AG04449 (cell line): ENCODE measurements at regions of chr1 and their contacts with region 1.

Region 1: GRCh38 chr1:10430216-10431069 is at the start of gene CENPS:
- DNase-seq: no peak
- H3K4me3 ChIP-seq: peak within 1 kb of the TSS; percentile 90
- CTCF ChIP-seq: peak; percentile 91

Region 2: GRCh38 chr1:9874959-9875635 is 555.3 kb before region 1 on chr1:
- CTCF ChIA-PET with region 1: interaction called, 11 read pairs
- POLR2A ChIA-PET with region 1: no interaction called
- DNase-seq: no peak
- H3K4me3 ChIP-seq: no peak overlapping the region
- CTCF ChIP-seq: peak; percentile 80

Region 3: GRCh38 chr1:10387413-10388079 is 42.9 kb before region 1 on chr1:
- CTCF ChIA-PET with region 1: interaction called, 34 read pairs
- POLR2A ChIA-PET with region 1: no interaction called
- DNase-seq: peak; percentile 65
- H3K4me3 ChIP-seq: peak overlapping the region; percentile 13; the same call in 1 of the 2 replicates
- CTCF ChIP-seq: peak; percentile 17

Region 4: GRCh38 chr1:10407201-10407600 is 23.2 kb before region 1 on chr1:
- CTCF ChIA-PET with region 1: interaction called, 24 read pairs
- POLR2A ChIA-PET with region 1: no interaction called
- DNase-seq: no peak
- H3K4me3 ChIP-seq: no peak overlapping the region
- CTCF ChIP-seq: no peak

Region 5: DNA sequence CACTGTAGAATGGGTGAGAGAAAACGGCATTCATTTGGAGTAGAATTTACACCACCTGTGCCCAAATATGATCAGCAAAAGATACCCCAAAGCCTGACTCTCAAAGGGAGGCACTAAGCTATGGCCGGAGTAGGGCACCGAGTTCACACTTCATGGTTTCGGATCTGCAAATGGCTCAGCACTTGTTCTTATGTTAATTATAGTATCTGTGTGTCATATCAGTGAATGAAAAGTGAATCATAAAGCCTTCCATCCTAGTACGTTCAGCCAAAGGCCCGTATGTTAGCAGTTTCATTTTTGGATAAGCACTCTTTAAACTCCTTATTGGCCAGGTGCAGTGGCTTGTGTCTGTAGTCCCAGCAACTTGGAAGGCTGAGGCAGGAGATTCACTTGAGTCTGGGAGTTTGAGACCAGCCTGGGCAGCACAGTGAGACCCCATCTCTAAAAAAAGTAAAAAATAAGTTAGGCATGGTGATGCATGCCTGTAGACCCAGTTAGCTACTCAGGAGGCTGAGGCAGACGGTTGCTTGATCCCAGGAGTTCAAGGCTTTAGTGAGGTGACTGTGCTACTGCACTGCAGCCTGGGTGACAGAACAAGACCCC is 14.5 kb after region 1 on chr1:
- CTCF ChIA-PET with region 1: interaction called, 39 read pairs
- POLR2A ChIA-PET with region 1: no interaction called
- DNase-seq: no peak
- H3K4me3 ChIP-seq: no peak overlapping the region
- CTCF ChIP-seq: no peak

Region 6: DNA sequence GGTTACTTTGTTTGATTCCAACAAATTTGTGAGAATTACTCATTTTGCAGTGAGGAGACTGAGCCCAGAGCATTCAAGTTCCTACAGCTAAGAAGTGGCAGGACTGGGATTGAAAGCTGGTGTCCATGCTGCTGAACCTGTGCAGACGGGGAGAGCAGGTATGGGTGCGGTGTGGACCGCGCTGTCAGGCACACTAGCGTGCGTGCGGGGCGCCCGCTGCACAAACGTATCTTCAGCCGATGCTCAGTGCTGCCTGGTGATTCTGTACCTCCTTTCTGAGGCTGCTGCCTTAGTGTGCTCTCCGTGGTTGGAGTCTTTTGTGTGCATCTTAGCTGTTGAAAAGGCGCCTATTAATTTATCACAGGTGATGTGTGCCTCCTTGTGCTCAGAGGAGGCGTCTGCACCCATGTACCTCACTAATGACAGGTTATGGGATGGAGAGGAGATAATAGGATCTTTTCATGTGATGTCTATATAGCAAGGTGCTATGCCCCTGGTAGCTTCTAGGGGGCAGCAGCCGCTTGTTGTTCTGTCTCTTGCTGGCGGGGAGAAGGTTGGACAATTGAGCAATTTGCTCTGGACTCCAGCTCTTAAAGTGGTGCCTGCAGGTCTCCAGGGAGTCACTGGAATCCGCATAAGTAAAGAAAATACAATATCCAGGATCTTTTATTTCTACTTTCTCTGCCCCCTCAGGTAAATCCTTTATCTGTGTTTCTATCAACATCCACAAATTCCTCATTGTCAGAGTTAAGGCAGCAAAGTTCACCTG is 76.9 kb after region 1 on chr1:
- CTCF ChIA-PET with region 1: interaction called, 12 read pairs
- POLR2A ChIA-PET with region 1: no interaction called
- DNase-seq: peak; percentile 42
- H3K4me3 ChIP-seq: no peak overlapping the region
- CTCF ChIP-seq: peak; percentile 82

Region 7: DNA sequence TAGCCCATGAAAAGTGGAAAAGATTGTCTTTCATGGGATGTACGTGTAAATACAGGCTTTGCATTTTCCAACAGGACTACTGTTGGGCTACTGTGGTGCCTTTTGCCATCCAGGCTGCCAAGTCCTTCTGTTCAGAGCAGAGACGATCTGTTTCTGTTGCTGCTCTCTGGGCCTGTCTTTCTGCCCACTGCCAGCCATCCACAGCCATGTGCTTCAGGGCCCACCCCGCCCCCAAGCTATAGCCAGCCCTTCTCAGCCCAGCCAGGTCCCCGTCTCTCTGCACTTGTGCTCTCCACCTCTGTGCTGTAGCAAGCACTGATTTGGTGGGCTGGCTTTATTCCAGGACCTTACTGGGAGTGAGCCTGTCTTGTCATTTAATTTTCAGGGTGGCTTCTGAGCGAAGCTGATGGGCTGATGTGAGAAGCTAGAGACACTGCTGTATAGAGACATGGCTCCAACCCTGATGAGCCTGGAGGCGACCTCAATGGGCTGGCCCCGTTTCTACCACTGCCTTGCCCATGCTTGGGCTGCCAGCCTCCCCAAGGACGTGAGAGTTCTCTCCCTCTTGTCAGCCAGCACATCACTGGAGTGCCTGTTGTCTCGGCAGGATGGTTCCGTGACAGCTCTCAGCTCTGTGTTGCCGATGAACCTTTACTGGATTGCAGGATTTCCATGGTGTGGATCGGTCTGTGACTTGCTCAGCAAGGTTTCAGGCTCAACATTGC is 182.2 kb after region 1 on chr1:
- CTCF ChIA-PET with region 1: no interaction called
- POLR2A ChIA-PET with region 1: no interaction called
- DNase-seq: no peak
- H3K4me3 ChIP-seq: no peak overlapping the region
- CTCF ChIP-seq: no peak